ENCODE measurements at regions of chr10 and their contacts with region 1.

Region 1: GRCh38 chr10:119933179-119933578 is 40.6 kb downstream of the SEC23IP start:
- DNase-seq: peak; percentile 14
- H3K4me3 Mint-ChIP-seq: no peak overlapping the region
- H3K27ac Mint-ChIP-seq: no peak overlapping the region
- H3K4me1 Mint-ChIP-seq: no peaks in the 10 kb centered on the region
- H3K27me3 Mint-ChIP-seq: no peaks in the 10 kb centered on the region
- CTCF ChIP-seq: no peak

Region 2: DNA sequence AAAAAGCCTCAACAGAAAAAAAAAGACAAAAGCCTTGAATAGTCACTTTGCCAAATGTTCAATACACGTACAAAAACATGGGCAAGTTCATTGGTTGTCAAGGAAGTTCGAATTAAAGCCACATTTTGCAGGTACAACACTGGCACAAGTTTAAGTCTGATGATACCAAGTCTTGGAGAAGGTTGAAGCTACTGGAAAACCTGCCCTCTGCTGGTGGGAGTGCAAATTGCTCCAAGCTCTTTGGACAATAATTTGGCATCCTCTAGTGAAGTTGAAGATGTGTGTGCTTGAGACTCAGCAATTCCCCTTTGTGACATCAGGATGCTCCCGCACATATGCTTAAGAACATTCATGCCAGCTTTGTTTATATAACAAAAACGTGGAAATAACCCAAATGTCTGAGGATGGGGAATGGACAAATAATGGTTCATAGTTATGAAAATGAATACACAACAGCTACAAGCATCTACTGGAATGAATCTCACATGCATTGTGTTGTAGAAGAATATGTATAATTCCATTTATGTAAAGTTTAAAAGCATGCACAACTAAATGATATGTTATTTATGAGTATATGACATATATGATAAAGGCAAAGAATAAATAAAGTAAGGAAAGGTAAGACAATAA is 403.8 kb after region 1 on chr10:
- CTCF ChIA-PET with region 1: interaction called, 5 read pairs
- POLR2A ChIA-PET with region 1: no interaction called
- intact Hi-C with region 1: loop called (anchors 1 kb)
- DNase-seq: peak; percentile 66
- H3K4me3 Mint-ChIP-seq: no peak overlapping the region
- H3K27ac Mint-ChIP-seq: no peak overlapping the region
- H3K4me1 Mint-ChIP-seq: no peaks in the 10 kb centered on the region
- H3K27me3 Mint-ChIP-seq: peaks cover 25% of the 10 kb centered on the region
- CTCF ChIP-seq: peak; percentile 64